Activated CD4-positive, alpha-beta memory T cell treated with anti-CD3 and anti-CD28 coated beads for 36 hours (primary cell): ENCODE measurements at regions of chr13 and their contacts with region 1.

Region 1: DNA sequence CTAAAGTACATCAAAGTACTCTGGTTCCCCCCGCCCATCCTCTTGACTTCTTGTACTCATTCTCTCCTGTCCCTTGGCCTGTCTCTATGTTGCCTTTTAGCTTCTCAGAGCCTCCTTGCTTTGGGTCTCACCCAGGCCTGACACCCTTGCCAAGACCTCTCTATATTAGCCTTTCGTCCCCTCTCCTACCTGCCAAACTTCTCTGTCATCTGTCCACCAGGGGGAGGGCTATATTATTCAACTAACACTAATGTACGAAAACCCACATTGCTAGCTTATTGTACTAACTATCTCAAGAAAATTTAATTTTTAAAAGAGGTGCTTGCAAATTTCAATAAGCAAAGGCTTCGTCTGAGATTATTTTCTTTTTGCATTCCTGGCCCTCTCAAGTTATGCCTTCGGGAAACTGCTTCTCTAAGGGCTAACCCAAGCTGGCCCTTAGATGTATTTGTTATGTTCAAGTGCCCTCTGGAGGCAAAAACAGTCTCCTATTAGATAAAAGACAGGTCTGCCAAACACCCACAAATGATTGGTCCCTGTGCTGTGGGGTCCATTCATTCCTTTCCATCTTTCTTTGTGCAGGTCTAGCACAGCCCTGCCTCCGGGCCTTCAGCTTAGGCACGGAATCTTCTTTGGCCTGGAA is 6.3 kb upstream of the MRPS31 start:
- DNase-seq: peak; percentile 58
- H3K4me3 Mint-ChIP-seq: peak overlapping the region; percentile 64
- H3K27ac Mint-ChIP-seq: peak overlapping the region; percentile 96
- H3K4me1 Mint-ChIP-seq: peaks cover 30% of the 10 kb centered on the region
- H3K27me3 Mint-ChIP-seq: no peaks in the 10 kb centered on the region

Region 2: DNA sequence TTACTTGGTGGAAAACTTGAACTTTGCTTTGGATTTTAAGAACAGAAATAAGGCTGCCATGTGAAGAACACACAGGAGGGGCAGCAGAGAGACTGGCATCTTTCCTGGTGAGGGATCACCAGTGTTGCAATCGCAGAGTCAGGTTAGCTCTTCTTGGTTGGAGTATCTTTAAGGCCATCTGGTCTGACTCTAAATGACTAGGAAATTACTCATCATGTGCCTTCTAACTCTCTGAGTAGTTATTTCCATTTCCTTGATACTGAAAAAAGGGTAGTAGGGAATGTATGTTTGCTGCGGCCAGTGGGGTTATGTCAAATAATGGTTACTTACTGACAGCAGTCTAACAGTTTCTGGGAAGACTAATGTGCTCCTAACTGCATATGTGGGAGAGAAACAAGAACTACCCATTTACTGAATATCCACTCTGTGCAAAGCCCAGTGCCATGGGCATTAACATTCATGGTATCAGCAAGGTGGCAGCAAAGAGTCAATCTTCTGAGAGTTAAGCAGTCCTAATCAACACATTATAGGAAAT is 999.7 kb before region 1 on chr13:
- CTCF ChIA-PET with region 1: interaction called, 7 read pairs
- POLR2A ChIA-PET with region 1: no interaction called
- intact Hi-C with region 1: loop called (anchors 2 kb)
- DNase-seq: peak; percentile 72
- H3K4me3 Mint-ChIP-seq: peak overlapping the region; percentile 4
- H3K27ac Mint-ChIP-seq: peak overlapping the region; percentile 92
- H3K4me1 Mint-ChIP-seq: peaks cover 52% of the 10 kb centered on the region
- H3K27me3 Mint-ChIP-seq: no peaks in the 10 kb centered on the region

Region 3: DNA sequence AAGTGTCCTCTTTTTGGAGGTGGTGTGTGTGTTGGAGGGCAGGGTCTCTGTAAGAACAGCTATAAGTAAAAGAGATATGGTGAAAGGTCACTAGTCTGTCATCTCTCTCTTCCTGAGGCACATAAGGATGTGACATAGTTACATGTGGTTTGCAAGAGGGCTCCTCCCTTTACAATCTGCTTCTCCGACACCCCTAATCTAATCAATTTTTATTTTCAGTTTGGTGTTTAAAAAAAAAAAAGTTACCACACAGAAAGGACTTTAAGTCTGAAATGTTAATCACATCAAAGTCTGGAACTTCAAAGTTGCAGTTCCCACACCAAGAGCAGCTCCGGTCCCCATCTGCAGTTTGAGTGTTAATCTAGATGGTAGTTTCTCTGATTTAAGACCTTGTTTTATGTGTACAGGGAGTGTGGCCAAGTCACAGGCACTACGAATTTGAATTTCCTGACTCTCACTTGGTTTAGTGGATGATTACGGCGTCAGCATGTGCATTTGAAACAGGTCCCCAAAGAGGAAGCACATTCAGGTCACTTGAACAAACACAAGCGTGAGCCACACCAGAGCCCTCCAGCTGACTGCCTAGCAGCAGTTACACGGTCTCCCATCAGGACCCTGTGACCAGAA is 164.0 kb before region 1 on chr13:
- CTCF ChIA-PET with region 1: no interaction called
- POLR2A ChIA-PET with region 1: no interaction called
- intact Hi-C with region 1: loop called (anchors 2 kb)
- DNase-seq: peak; percentile 77
- H3K4me3 Mint-ChIP-seq: peak overlapping the region; percentile 74
- H3K27ac Mint-ChIP-seq: peak overlapping the region; percentile 97
- H3K4me1 Mint-ChIP-seq: peaks cover 92% of the 10 kb centered on the region
- H3K27me3 Mint-ChIP-seq: no peaks in the 10 kb centered on the region

Region 4: GRCh38 chr13:40789275-40790133 is 12.2 kb after region 1 on chr13 and contains the start of gene SLC25A15:
- CTCF ChIA-PET with region 1: interaction called, 27 read pairs
- POLR2A ChIA-PET with region 1: interaction called, 4 read pairs
- intact Hi-C with region 1: no loop called
- DNase-seq: peak; percentile 80
- H3K4me3 Mint-ChIP-seq: peak within 1 kb of the TSS; percentile 77
- H3K27ac Mint-ChIP-seq: peak within 1 kb of the TSS; percentile 67
- H3K4me1 Mint-ChIP-seq: peaks cover 31% of the 10 kb centered on the region
- H3K27me3 Mint-ChIP-seq: no peaks in the 10 kb centered on the region
- total RNA-seq, gene SLC25A15: 16.2 to 16.9 TPM

Region 5: GRCh38 chr13:40922437-40923040 is 145.3 kb after region 1 on chr13:
- CTCF ChIA-PET with region 1: interaction called, 7 read pairs
- POLR2A ChIA-PET with region 1: no interaction called
- intact Hi-C with region 1: loop called (anchors 2 kb)
- DNase-seq: no peak
- H3K4me3 Mint-ChIP-seq: peak overlapping the region; percentile 68
- H3K27ac Mint-ChIP-seq: peak overlapping the region; percentile 60
- H3K4me1 Mint-ChIP-seq: peaks cover 15% of the 10 kb centered on the region
- H3K27me3 Mint-ChIP-seq: no peaks in the 10 kb centered on the region

Region 6: GRCh38 chr13:41061075-41061913 is 284.0 kb after region 1 on chr13 and contains the start of gene WBP4:
- CTCF ChIA-PET with region 1: interaction called, 6 read pairs
- POLR2A ChIA-PET with region 1: no interaction called
- intact Hi-C with region 1: loop called (anchors 5 kb)
- DNase-seq: peak; percentile 92
- H3K4me3 Mint-ChIP-seq: peak within 1 kb of the TSS; percentile 97
- H3K27ac Mint-ChIP-seq: peak within 1 kb of the TSS; percentile 99
- H3K4me1 Mint-ChIP-seq: peaks cover 44% of the 10 kb centered on the region
- H3K27me3 Mint-ChIP-seq: no peaks in the 10 kb centered on the region
- total RNA-seq, gene WBP4: 12.6 to 13.5 TPM

Region 7: GRCh38 chr13:41193919-41194824 is 416.9 kb after region 1 on chr13 and contains the start of gene KBTBD7:
- CTCF ChIA-PET with region 1: no interaction called
- POLR2A ChIA-PET with region 1: no interaction called
- intact Hi-C with region 1: loop called (anchors 1 kb)
- DNase-seq: peak; percentile 96
- H3K4me3 Mint-ChIP-seq: peak within 1 kb of the TSS; percentile 90
- H3K27ac Mint-ChIP-seq: peak within 1 kb of the TSS; percentile 92
- H3K4me1 Mint-ChIP-seq: peaks cover 43% of the 10 kb centered on the region
- H3K27me3 Mint-ChIP-seq: no peaks in the 10 kb centered on the region
- total RNA-seq, gene KBTBD7: 3.6 to 4.1 TPM